Activated naive CD4-positive, alpha-beta T cell treated with anti-CD3 and anti-CD28 coated beads for 36 hours (primary cell): ENCODE measurements at regions of chr12 and their contacts with region 1.

Region 1: DNA sequence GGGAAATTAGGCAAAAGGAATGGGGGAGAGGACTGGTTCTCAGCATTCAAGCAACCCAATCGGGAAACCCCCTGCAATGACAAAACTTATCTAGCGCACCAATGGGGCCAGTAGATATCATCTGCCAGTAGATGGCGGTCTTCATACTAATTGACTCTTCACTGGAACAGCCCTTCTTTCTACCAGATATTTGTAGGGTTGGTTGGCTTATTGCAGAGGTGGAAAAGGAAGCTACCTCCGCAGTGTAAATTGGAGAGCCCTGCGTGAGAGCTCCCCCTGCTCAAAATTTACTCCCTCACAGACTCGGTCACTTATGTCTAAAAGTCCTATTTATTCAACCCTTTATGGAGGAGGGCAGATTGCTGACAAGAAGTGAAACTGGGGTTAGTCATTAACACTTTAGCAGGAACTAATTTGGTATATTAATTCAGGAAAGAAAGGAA is 166.1 kb upstream of the CCND2 start:
- DNase-seq: peak; percentile 87
- H3K4me3 Mint-ChIP-seq: peak overlapping the region; percentile 48
- H3K27ac Mint-ChIP-seq: peak overlapping the region; percentile 89
- H3K4me1 Mint-ChIP-seq: peaks cover 37% of the 10 kb centered on the region
- H3K27me3 Mint-ChIP-seq: peaks cover 3% of the 10 kb centered on the region

Region 2: GRCh38 chr12:3236345-3237187 is 870.9 kb before region 1 on chr12:
- CTCF ChIA-PET with region 1: no interaction called
- intact Hi-C with region 1: no loop called
- DNase-seq: peak; percentile 35
- H3K4me3 Mint-ChIP-seq: no peak overlapping the region
- H3K27ac Mint-ChIP-seq: no peak overlapping the region
- H3K4me1 Mint-ChIP-seq: no peaks in the 10 kb centered on the region
- H3K27me3 Mint-ChIP-seq: no peaks in the 10 kb centered on the region

Region 3: DNA sequence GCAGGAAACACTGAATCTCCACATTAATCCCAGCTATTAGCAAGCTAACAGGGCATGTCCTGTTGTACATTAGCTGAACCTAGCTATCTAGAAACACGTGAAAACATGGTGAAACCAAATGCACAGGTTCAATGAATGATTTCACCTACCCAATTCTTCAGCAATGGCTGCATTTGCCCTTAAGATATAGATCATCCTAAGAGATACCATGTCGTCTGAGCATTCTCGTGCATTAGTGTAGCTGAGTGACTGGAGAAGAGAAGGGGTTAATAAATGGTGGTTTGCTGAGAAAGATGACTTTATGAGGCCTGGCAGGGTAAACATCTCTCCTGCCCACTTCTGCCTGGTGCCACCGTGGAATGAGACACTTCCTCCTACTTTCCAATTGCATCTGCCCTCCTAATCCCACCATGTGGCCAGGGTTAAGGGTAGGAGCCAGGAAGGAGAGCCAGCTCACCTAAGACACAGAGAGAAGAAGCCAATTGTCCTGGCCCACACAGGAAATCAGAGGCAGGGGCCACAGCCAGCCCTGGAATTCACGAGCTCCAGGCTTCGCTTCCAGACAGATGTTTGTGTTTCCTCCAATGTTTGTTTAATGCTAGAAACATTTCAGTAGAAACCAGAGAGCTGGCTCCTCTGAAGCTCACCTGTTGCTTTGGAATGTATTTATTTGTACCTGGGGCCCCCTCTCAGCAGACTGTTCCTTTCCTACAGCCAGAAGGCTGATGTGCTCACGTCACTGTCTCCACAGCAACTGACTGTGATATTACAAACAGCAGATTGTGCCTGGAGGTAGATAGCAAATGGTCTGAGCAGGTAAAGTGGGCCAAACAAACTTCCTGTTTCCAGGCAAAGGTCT is 108.3 kb before region 1 on chr12:
- CTCF ChIA-PET with region 1: interaction called, 4 read pairs
- intact Hi-C with region 1: loop called (anchors 5 kb)
- DNase-seq: no peak
- H3K4me3 Mint-ChIP-seq: no peak overlapping the region
- H3K27ac Mint-ChIP-seq: no peak overlapping the region
- H3K4me1 Mint-ChIP-seq: peaks cover 5% of the 10 kb centered on the region
- H3K27me3 Mint-ChIP-seq: no peaks in the 10 kb centered on the region

Region 4: DNA sequence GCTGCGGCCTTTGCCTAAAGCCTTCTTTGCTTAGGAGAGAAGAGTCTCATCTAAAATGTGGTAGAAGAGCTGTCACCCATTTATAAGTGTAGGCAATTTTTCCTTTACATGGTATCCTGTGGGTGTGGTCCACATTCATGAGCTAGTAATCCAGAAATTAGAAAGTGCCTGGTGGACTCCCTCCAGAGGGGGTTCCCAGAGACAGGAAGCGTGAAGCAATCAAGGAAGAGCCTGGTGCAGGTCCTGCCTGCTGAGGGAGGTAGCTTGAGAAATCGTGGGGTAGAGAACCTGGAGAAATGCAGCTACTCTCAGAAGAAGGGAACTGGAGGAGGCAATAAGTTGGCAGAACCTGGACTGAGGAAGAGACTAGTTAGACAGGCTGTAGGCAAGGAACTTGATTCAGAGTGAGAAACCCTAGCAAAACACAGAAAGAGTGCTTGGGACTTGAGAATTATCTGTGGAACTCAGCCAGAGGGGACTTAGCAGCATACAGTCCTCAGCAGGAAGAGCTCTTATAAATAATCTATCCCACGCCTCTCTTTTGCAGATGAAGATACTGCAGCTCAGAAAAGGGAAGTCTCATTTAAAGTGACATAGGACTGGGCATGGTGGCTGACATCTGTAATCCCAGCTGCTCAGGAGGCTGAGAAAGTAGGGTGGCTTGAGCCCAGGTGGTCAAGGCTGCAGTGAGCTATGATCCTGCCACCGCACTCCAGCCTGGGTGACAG is 16.3 kb before region 1 on chr12:
- CTCF ChIA-PET with region 1: interaction called, 21 read pairs
- intact Hi-C with region 1: no loop called
- DNase-seq: no peak
- H3K4me3 Mint-ChIP-seq: no peak overlapping the region
- H3K27ac Mint-ChIP-seq: no peak overlapping the region
- H3K4me1 Mint-ChIP-seq: peaks cover 11% of the 10 kb centered on the region
- H3K27me3 Mint-ChIP-seq: no peaks in the 10 kb centered on the region

Region 5: DNA sequence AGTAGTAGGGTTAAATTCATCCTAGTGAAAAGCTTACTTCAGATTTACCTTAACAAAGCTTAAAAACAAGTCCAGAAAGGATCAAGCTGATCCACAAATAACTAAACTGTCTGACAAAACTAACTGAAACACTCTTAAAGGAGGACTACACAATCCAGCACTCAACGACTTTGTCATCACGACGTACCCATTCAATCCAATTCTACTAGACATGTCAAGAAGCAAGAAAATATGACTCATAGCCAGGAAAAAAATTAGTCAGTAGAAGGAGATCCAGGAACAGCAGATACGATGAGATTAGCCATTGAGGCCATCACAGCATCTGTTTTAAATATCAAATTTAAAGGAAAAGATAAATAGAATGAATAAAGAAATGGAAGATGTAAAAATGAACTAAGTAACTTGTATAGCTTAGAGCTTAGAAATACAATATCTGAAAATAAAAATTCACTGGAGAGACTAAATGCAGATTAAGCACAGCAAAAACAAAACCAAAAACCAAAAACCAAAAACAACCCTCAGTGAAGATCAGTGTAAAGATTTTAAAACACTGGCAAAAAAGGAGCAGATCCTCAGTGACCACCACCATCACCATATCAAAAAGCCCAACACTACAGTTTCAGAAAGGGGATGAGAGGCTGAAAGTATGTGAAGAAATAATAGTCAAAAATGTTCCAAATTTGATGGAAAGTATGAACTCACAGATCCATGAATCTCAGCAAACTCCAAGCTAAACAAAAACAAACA is 71.1 kb after region 1 on chr12:
- CTCF ChIA-PET with region 1: interaction called, 5 read pairs
- intact Hi-C with region 1: loop called (anchors 2 kb)
- DNase-seq: peak; percentile 64
- H3K4me3 Mint-ChIP-seq: peak overlapping the region; percentile 14
- H3K27ac Mint-ChIP-seq: peak overlapping the region; percentile 87
- H3K4me1 Mint-ChIP-seq: peaks cover 21% of the 10 kb centered on the region
- H3K27me3 Mint-ChIP-seq: no peaks in the 10 kb centered on the region

Region 6: GRCh38 chr12:4215229-4216186 is 108.1 kb after region 1 on chr12:
- CTCF ChIA-PET with region 1: interaction called, 11 read pairs
- intact Hi-C with region 1: loop called (anchors 1 kb)
- DNase-seq: peak; percentile 79
- H3K4me3 Mint-ChIP-seq: peak overlapping the region; percentile 60
- H3K27ac Mint-ChIP-seq: peak overlapping the region; percentile 91
- H3K4me1 Mint-ChIP-seq: peaks cover 33% of the 10 kb centered on the region
- H3K27me3 Mint-ChIP-seq: no peaks in the 10 kb centered on the region

Region 7: DNA sequence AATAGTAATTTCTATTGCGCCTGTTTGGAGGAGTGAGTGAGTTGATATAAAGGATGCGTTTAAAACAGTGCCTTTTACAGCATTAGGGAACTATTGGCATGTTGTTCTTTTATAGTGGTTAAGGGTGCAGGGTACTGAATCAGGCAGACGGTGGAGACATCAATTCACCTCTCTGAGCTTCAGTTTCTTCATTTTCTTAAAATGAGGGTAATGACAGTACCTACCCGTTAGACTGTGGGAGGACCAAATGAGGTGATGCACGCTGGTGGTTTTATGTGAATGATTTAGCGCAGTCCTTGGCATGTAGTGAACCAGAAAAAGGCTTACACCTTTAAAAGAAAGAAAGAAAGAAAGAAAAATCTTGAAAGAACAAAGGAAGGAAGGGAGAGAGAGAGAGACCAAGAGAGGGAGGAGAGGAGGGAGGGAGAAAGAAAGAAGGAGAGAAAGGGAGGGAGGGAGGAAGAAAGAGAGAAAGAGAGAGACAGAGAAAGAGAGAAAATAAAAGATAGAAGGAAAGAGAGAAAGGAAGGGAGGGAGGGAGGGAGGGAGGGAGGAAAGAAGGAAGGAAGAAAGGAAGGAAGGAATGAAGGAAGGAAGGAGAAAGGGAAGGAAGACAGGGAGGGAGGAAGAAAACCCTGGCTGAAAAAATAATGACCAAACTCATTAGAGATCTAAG is 143.9 kb after region 1 on chr12:
- CTCF ChIA-PET with region 1: interaction called, 3 read pairs
- intact Hi-C with region 1: loop called (anchors 1 kb)
- DNase-seq: peak; percentile 69
- H3K4me3 Mint-ChIP-seq: peak overlapping the region; percentile 8
- H3K27ac Mint-ChIP-seq: peak overlapping the region; percentile 74
- H3K4me1 Mint-ChIP-seq: peaks cover 17% of the 10 kb centered on the region
- H3K27me3 Mint-ChIP-seq: no peaks in the 10 kb centered on the region